Activated B cell treated with CpG ODN at 0.5 μM for 24 hours (primary cell): ENCODE measurements at regions of chr19 and their contacts with region 1.

Region 1: GRCh38 chr19:51607920-51608562 is 22.2 kb downstream of the SIGLEC5 start:
- DNase-seq: peak; percentile 54
- ATAC-seq: no peak
- H3K4me3 Mint-ChIP-seq: no peak overlapping the region
- H3K27ac Mint-ChIP-seq: peak overlapping the region; percentile 88
- H3K4me1 Mint-ChIP-seq: peaks cover 63% of the 10 kb centered on the region
- H3K27me3 Mint-ChIP-seq: no peaks in the 10 kb centered on the region
- CTCF ChIP-seq: no peak

Region 2: DNA sequence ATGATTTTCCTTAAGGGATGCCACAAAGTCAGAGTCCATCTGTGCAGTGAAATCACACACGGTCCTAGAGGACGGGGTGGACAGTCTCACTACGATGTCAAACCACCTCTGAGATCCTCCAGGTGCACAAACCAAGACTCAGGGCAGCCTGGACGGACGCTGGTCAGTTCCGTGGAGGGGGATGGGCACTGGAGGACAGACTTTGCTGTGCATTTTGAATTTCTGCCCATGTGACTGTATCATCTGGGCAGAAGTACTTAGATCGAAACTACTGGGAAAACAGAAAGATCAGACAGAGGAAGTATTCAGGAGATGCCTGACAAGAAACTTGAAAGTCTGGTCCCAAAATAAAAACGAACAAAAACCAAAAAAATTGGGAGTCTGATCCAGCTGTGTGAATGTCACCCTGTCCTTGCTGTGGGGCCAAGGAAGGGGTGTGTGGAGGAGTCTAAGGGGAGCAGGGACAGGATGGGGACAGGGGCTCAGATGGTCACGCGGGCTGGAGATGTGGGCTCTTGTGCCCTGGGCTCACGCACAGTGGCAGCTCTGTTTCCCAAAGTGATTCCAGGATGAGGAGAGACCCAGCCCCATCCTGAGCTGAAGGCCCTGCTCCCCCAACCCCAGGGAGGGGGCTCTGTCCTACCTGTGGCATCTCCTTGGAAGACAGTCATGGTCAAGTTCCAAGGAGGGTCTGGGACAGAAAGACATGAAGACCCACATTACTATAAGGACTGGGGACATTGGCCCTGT is 151.3 kb before region 1 on chr19:
- CTCF ChIA-PET with region 1: no interaction called
- POLR2A ChIA-PET with region 1: no interaction called
- intact Hi-C with region 1: no loop called
- DNase-seq: no peak
- ATAC-seq: no peak
- H3K4me3 Mint-ChIP-seq: no peak overlapping the region
- H3K27ac Mint-ChIP-seq: no peak overlapping the region
- H3K4me1 Mint-ChIP-seq: no peaks in the 10 kb centered on the region
- H3K27me3 Mint-ChIP-seq: peaks cover 26% of the 10 kb centered on the region
- CTCF ChIP-seq: no peak

Region 3: DNA sequence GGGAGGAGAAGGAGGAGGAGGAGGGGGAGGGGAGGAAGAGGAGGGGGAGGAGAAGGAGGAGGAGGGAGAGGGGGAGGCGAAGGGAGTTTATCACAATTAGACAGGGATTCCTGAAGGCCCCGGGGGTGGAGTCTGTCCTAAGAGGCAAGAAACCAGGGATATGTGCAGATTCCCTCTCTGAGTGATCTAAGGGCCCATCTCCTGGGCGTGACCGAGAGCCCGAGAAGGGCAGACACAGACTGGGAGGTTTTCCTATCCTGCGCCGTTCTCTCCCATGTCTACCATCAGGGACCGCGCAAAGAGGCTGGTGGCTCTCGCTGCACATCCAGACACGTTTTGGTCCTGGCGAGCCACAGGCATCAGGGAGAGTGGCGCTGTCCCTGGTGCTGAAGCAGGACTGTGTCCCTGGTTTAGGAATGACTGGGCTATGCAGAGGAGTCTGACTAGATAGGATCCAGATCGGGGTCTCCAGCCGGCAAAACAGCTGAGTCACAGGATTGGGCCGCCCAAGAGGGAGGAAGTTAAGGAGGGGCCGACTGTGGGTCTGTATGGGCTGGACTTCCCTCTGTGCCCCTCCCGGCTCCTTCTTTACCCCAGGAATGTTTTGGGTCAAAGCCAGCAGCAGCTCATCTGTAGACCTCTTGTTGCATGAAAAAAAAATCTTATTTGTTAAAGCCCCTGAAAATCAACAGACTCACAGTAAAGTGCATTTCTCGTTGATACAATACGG is 54.9 kb before region 1 on chr19:
- CTCF ChIA-PET with region 1: no interaction called
- POLR2A ChIA-PET with region 1: interaction called, 5 read pairs
- intact Hi-C with region 1: loop called (anchors 2 kb)
- DNase-seq: peak; percentile 56
- ATAC-seq: no peak
- H3K4me3 Mint-ChIP-seq: peak overlapping the region; percentile 89
- H3K27ac Mint-ChIP-seq: peak overlapping the region; percentile 46
- H3K4me1 Mint-ChIP-seq: peaks cover 72% of the 10 kb centered on the region
- H3K27me3 Mint-ChIP-seq: no peaks in the 10 kb centered on the region
- CTCF ChIP-seq: no peak

Region 4: DNA sequence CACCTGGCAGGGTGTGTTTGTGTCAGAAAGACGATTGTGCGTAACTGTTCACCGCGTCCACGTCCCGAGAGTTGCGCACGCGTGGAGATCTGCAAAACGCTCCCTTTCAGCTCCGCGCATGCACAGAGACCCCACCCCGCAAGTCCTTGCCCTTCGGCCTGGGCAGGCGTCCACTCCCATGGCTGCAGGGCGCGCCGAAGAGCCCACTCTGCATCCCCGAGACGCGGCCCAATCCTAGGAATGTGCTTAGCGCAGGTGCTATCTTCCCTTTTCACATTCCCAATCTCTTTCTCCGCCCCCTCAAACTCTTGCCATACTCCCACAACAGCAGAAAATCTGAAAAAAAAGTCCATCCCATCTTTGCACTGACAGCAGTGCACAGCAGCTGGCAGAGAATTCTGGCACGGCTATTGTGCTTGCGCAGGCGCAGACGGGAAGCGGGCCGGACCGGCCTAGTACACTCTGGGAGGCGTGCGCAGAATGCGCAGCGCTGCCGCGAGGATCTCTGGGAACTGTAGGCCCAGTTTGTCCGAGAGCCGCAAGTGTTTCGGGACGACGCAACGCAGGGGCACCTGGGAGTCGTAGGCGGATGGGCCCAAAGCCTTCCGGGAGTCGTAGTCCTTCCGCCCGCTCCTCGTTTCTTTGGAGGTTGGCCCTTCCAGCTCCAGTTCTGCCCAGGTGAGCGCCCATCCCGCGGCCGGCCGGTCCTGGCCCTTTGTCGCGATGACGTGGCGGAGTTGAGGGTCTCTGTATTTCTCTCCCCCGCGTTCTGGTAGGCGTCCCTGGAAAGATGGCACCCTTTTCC is 13.9 kb before region 1 on chr19:
- CTCF ChIA-PET with region 1: interaction called, 5 read pairs
- POLR2A ChIA-PET with region 1: interaction called, 4 read pairs
- intact Hi-C with region 1: loop called (anchors 1 kb)
- DNase-seq: peak; percentile 93
- ATAC-seq: peak; percentile 100
- H3K4me3 Mint-ChIP-seq: peak overlapping the region; percentile 96
- H3K27ac Mint-ChIP-seq: peak overlapping the region; percentile 90
- H3K4me1 Mint-ChIP-seq: peaks cover 27% of the 10 kb centered on the region
- H3K27me3 Mint-ChIP-seq: no peaks in the 10 kb centered on the region
- CTCF ChIP-seq: no peak

Region 5: GRCh38 chr19:51651216-51651846 is 43.3 kb after region 1 on chr19:
- CTCF ChIA-PET with region 1: interaction called, 9 read pairs
- POLR2A ChIA-PET with region 1: interaction called, 3 read pairs
- intact Hi-C with region 1: loop called (anchors 1 kb)
- DNase-seq: peak; percentile 53
- ATAC-seq: peak; percentile 86
- H3K4me3 Mint-ChIP-seq: peak overlapping the region; percentile 33
- H3K27ac Mint-ChIP-seq: peak overlapping the region; percentile 81
- H3K4me1 Mint-ChIP-seq: peaks cover 61% of the 10 kb centered on the region
- H3K27me3 Mint-ChIP-seq: no peaks in the 10 kb centered on the region
- CTCF ChIP-seq: no peak

Region 6: GRCh38 chr19:51668216-51668615 is 60.2 kb after region 1 on chr19:
- CTCF ChIA-PET with region 1: no interaction called
- POLR2A ChIA-PET with region 1: no interaction called
- intact Hi-C with region 1: no loop called
- DNase-seq: no peak
- ATAC-seq: no peak
- H3K4me3 Mint-ChIP-seq: no peak overlapping the region
- H3K27ac Mint-ChIP-seq: no peak overlapping the region
- H3K4me1 Mint-ChIP-seq: no peaks in the 10 kb centered on the region
- H3K27me3 Mint-ChIP-seq: peaks cover 33% of the 10 kb centered on the region
- CTCF ChIP-seq: no peak